Activated CD4-positive, alpha-beta memory T cell treated with anti-CD3 and anti-CD28 coated beads for 36 hours (primary cell): ENCODE measurements at regions of chr2 and their contacts with region 1.

Region 1: GRCh38 chr2:178796079-178796677 is 11.0 kb downstream of the TTN start:
- DNase-seq: no peak
- H3K4me3 Mint-ChIP-seq: no peak overlapping the region
- H3K27ac Mint-ChIP-seq: no peak overlapping the region
- H3K4me1 Mint-ChIP-seq: no peaks in the 10 kb centered on the region
- H3K27me3 Mint-ChIP-seq: no peaks in the 10 kb centered on the region

Region 2: DNA sequence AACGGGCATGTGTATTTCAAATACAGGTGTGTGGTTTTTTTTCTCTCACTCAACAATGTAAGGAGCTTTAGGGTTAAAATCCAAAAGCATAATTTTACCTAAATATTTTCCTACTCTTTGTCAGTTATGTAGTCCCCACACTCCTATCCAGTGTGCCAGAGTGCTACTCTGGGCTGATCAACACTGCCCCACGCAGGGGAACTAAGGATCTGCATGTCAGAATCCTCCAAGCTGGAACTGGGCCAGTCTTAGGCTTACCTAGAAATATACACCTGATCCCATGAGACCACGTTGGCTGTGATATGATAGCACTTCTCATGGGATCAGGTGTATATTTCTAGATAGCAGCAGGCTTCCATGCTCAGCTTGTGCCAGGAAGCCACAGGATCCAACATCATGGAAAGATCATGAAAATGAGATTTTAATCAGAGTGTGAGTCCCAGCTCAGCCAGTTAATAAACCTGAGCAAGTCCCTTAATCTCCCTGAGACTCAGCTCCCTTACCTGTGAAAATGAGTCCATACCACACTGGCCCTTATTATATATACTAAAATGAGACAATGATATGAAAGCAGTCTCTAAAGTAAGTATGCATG is 224.1 kb after region 1 on chr2:
- CTCF ChIA-PET with region 1: no interaction called
- POLR2A ChIA-PET with region 1: no interaction called
- intact Hi-C with region 1: loop called (anchors 2 kb)
- DNase-seq: peak; percentile 63
- H3K4me3 Mint-ChIP-seq: no peak overlapping the region
- H3K27ac Mint-ChIP-seq: no peak overlapping the region
- H3K4me1 Mint-ChIP-seq: peaks cover 4% of the 10 kb centered on the region
- H3K27me3 Mint-ChIP-seq: no peaks in the 10 kb centered on the region

Region 3: DNA sequence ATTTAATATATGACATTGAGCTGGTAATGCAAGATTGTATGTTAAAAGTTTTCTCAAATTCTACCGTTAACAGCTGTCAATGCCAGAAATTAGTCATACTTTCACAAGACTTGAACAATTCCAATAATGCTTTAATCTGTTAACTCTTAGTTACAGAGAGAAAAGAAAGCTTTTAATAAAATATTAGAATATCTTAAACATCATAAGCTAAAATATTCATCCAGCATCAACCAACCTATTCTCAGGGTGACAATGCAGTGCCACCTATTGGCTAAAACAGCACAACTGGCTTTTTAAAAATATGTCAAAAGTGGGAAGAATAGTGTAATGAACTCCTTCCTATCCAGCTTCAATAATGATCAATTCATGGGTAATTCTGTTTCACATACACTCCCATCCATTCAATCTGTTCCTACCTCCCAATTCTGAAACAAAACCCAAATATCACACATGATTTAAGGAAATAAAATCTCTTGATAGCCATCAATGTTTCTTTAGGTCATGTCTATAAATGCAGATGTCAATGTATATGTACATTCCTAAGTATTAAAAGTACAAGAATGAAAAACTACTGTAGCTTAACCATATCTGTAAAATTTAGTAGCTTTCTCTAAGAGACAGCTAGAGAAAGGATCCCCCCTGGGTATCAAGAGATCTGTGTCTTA is 333.5 kb after region 1 on chr2:
- CTCF ChIA-PET with region 1: interaction called, 3 read pairs
- POLR2A ChIA-PET with region 1: no interaction called
- intact Hi-C with region 1: loop called (anchors 10 kb)
- DNase-seq: no peak
- H3K4me3 Mint-ChIP-seq: no peak overlapping the region
- H3K27ac Mint-ChIP-seq: no peak overlapping the region
- H3K4me1 Mint-ChIP-seq: no peaks in the 10 kb centered on the region
- H3K27me3 Mint-ChIP-seq: no peaks in the 10 kb centered on the region